ENCODE measurements at regions of chr16 and their contacts with region 1.

Region 1: GRCh38 chr16:79970551-79971236 is 370.2 kb upstream of the MAF start:
- DNase-seq: no peak
- H3K4me3 ChIP-seq: no peak overlapping the region
- H3K4me1 ChIP-seq: peaks cover 2% of the 10 kb centered on the region
- H3K27me3 ChIP-seq: no peaks in the 10 kb centered on the region

Region 2: GRCh38 chr16:79182616-79183015 is 788.1 kb before region 1 on chr16:
- in situ Hi-C with region 1: no loop called
- DNase-seq: no peak
- H3K4me3 ChIP-seq: no peak overlapping the region
- H3K4me1 ChIP-seq: no peaks in the 10 kb centered on the region
- H3K27me3 ChIP-seq: no peaks in the 10 kb centered on the region

Region 3: DNA sequence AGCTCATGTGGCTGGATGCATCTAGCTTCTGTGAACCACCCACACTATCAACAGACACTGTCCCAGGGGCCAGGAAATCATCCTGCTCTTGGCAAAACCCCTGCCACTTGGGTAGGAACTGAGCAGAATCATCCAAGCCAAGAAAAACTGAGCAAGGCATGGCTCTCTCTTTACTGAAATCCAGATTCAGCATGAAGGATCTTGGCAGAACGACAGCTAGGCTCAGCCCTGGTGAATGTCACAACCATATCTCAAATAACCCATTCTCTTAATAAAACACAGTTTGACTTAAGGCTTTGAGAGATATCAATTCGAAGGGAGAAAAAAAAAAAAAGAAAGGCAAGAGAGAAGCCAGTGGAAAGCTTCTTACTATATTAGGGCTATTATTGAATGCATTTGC is 442.4 kb before region 1 on chr16:
- in situ Hi-C with region 1: no loop called
- DNase-seq: no peak
- H3K4me3 ChIP-seq: no peak overlapping the region
- H3K4me1 ChIP-seq: no peaks in the 10 kb centered on the region
- H3K27me3 ChIP-seq: no peaks in the 10 kb centered on the region

Region 4: DNA sequence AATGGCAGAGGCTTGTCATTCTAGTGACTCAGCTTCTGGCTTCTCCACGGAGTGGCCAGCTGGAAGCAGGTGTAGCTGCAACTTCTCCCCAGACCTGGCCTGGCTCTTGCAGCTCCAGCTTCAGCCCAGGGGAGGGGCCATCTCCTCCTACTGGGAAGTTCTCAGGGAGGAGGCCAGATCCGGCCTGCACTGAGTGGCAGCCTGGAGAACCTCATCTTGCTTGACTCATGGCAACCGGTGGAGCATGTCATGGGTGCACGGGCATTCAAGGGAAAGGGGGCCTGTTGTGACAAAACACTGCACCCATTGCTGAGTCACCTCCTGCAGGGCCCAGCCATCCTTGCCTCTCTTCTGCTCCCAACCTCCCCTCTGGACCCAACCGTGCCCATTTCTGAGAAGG is 96.3 kb before region 1 on chr16:
- in situ Hi-C with region 1: loop called (anchors 25 kb)
- DNase-seq: no peak
- H3K4me3 ChIP-seq: no peak overlapping the region
- H3K4me1 ChIP-seq: no peaks in the 10 kb centered on the region
- H3K27me3 ChIP-seq: no peaks in the 10 kb centered on the region

Region 5: GRCh38 chr16:80613747-80614655 is 643.3 kb after region 1 on chr16:
- in situ Hi-C with region 1: no loop called
- DNase-seq: no peak
- H3K4me3 ChIP-seq: no peak overlapping the region
- H3K4me1 ChIP-seq: no peaks in the 10 kb centered on the region
- H3K27me3 ChIP-seq: no peaks in the 10 kb centered on the region